ENCODE measurements at regions of chr9 and their contacts with region 1.

Region 1: DNA sequence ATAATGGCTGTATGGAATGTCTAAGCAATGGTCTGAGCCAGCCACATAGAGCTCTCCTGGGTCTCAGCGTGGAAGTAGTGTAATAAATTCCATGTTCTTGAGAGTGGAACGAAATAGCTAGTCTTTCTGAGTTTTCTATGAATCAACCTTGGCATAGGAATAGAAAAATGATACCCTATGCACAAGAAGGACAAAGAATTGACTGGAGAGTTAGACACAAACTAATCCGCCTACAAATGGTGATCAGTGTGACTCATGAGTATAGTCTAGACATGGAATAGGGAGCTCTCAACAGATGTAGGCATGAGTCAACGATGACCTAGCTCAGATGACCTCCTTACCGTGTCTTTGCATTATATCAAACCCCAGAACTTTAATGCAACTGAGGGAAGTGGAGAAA is 256.8 kb upstream of the GRIN3A start:
- DNase-seq: no peak
- H3K4me3 ChIP-seq: no peak overlapping the region
- H3K4me3 Mint-ChIP-seq: no peak overlapping the region
- H3K27ac ChIP-seq: no peak overlapping the region
- H3K27ac Mint-ChIP-seq: no peak overlapping the region
- H3K4me1 ChIP-seq: no peaks in the 10 kb centered on the region
- H3K4me1 Mint-ChIP-seq: no peaks in the 10 kb centered on the region
- H3K27me3 ChIP-seq: no peaks in the 10 kb centered on the region
- H3K27me3 Mint-ChIP-seq: no peaks in the 10 kb centered on the region

Region 2: GRCh38 chr9:102049586-102050246 is 54.5 kb after region 1 on chr9:
- CTCF ChIA-PET with region 1: no interaction called
- POLR2A ChIA-PET with region 1: no interaction called
- intact Hi-C with region 1: loop called (anchors 10 kb)
- DNase-seq: no peak
- H3K4me3 ChIP-seq: no peak overlapping the region
- H3K4me3 Mint-ChIP-seq: peak overlapping the region in 1 of 8 donors; percentile 13
- H3K27ac ChIP-seq: no peak overlapping the region
- H3K27ac Mint-ChIP-seq: no peak overlapping the region
- H3K4me1 ChIP-seq: no peaks in the 10 kb centered on the region
- H3K4me1 Mint-ChIP-seq: no peaks in the 10 kb centered on the region
- H3K27me3 ChIP-seq: no peaks in the 10 kb centered on the region
- H3K27me3 Mint-ChIP-seq: no peaks in the 10 kb centered on the region

Measured in CD4-positive, alpha-beta memory T cell (primary cell).